AG04450 (cell line): ENCODE measurements at regions of chr12 and their contacts with region 1.

Region 1: DNA sequence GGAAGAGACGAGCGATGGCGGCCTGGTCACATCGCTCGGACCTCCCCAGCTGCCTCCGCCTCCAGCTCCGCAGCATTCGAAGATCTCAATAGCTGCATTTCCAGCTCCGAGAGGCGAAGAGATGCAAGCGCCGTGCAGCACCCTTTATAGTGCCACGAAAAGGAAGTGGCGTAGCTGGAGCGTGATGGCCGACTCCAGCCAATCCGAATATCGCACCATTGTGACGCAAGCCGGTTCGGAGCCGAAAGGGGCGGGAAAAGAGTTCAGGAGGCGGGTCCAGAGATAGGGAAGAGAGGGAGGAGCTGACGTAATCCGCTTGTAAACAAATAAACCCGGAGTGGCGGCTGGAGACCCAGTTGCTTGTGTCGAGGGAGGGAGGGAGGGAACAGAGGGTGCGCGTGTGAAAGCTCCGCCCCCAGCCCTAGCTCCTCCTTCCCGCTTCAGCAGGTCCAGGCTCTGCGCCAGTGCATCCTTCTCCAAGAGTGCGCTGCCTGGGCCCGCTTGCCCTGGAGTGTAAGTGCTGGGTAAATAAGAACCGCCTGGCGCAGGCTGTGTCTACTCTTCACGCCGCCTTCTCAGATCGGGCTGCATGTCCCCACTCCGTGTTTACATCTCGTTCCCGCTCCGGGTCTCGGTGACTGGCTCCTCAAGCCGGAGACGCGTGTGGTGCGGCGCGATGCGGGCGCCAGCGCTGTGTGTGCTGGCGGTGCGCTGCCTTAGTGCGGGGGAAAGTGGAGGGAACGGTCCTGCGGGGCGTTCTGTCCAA is at the start of gene BTG1:
- DNase-seq: peak; percentile 100
- H3K4me3 ChIP-seq: peak within 1 kb of the TSS; percentile 98
- H3K27ac ChIP-seq: peak within 1 kb of the TSS; percentile 95
- H3K27me3 ChIP-seq: no peaks in the 10 kb centered on the region
- CTCF ChIP-seq: no peak
- polyA plus RNA-seq, gene BTG1: 88.8 and 89.7 TPM in 2 replicates

Region 2: GRCh38 chr12:91974512-91975085 is 171.3 kb before region 1 on chr12:
- CTCF ChIA-PET with region 1: interaction called, 3 read pairs
- POLR2A ChIA-PET with region 1: interaction called, 10 read pairs
- DNase-seq: no peak
- H3K4me3 ChIP-seq: no peak overlapping the region
- H3K27ac ChIP-seq: no peak overlapping the region
- H3K27me3 ChIP-seq: no peaks in the 10 kb centered on the region
- CTCF ChIP-seq: no peak

Region 3: GRCh38 chr12:92075425-92075914 is 70.4 kb before region 1 on chr12:
- CTCF ChIA-PET with region 1: interaction called, 4 read pairs
- POLR2A ChIA-PET with region 1: interaction called, 28 read pairs
- DNase-seq: no peak
- H3K4me3 ChIP-seq: no peak overlapping the region
- H3K27ac ChIP-seq: peak overlapping the region; percentile 57
- H3K27me3 ChIP-seq: no peaks in the 10 kb centered on the region
- CTCF ChIP-seq: no peak

Region 4: DNA sequence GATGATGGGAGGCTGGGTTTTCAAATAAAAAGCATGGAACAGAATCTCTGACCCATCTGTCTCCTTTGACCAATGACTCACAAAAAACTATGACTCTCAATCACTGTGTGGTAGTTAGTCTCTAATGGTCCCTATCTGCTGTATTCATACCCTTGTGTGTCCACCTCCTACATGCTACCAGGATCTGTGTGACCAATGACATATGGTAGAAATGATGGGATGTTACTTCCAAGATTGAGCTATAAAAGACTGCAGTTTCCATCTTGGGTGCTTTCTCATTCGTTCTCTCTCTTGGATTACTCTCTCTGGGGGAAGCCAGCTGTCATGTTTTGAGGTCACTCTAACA is 144.4 kb after region 1 on chr12:
- CTCF ChIA-PET with region 1: no interaction called
- POLR2A ChIA-PET with region 1: interaction called, 15 read pairs
- DNase-seq: no peak
- H3K4me3 ChIP-seq: no peak overlapping the region
- H3K27ac ChIP-seq: no peak overlapping the region
- H3K27me3 ChIP-seq: no peaks in the 10 kb centered on the region
- CTCF ChIP-seq: no peak

Region 5: DNA sequence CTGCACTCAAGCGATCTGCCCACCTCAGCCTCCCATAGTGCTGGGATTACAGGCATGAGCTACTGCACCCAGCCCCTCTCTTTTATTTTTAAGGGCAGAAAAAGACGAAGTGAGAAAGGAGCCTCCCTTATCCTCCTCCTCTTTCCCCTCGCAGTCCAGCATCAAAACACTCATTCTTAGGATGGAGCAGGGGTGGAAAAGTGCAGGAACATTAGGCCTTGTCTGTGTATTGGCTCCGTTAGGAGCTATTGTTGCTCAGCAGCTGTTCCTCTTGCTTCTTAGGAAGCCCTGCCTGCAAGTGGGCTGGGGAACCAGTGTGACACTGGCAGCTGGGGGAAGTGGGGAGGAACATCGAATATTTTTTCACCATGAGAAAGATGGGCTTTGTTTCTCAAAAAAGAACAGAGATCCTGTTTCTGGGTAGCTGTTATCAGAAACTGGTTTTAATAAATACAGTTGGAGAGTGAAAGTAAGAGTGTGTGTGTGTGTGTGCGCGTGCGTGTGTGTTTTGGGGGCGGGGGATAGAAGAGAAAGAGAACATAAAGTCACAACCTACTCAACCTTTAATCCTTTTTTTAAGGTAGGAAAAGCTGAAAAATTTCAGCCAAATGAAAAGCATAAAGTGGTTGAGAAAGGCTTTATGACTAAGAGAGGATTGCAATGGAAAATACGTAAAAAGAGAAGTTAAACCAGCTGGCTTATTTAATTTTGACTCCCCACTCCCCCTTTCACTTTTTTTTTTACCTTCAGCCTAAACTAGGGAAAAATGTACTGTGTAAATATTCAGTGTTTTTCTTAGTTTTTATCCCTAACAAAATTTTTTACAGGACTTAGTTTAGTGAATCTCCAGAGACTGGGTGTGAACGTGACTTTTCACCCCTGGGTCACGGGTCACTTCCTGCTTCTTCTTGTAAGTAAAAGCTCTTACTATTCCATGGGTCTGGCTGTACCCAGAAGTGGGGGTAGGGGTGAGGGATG is 359.6 kb after region 1 on chr12:
- CTCF ChIA-PET with region 1: no interaction called
- POLR2A ChIA-PET with region 1: interaction called, 30 read pairs
- DNase-seq: no peak
- H3K4me3 ChIP-seq: peak overlapping the region; percentile 28
- H3K27ac ChIP-seq: peak overlapping the region; percentile 71
- H3K27me3 ChIP-seq: no peaks in the 10 kb centered on the region
- CTCF ChIP-seq: no peak

Region 6: DNA sequence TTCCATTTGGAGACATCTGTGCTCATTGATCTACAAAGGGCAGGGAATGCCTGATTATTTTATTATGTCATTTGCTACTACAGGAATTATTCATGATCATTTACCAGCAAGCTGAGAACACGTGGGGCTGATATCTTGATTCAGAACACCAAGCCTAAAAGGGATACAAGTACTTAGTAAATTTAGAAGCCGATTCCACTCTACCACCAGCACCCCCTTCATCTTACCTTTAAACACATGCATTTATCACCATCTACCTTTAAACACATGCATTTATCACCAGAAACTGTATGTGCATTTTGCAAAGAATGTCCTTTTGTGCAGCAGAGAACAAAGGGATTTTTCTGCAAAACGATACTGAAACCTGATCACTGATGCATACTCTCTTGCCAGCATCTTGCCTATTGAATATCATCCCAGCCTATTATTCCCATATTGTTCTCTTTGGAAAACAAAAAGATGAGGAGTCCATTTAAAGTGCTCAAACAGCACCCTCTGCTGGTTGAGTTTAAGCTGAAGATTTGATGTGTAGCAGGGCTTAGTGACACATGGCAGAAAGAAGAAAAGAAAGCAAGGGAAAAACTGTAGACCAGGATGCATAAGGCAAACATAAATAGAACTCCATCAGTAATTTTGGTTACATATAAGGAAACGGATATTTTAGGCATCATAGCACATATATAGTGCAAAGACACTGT is 424.3 kb after region 1 on chr12:
- CTCF ChIA-PET with region 1: interaction called, 15 read pairs
- POLR2A ChIA-PET with region 1: interaction called, 11 read pairs
- DNase-seq: peak; percentile 77
- H3K4me3 ChIP-seq: no peak overlapping the region
- H3K27ac ChIP-seq: no peak overlapping the region
- H3K27me3 ChIP-seq: no peaks in the 10 kb centered on the region
- CTCF ChIP-seq: peak; percentile 79